Esophagus muscularis mucosa (tissue), 4 donors: ENCODE measurements at regions of chr5 and their contacts with region 1.

Region 1: DNA sequence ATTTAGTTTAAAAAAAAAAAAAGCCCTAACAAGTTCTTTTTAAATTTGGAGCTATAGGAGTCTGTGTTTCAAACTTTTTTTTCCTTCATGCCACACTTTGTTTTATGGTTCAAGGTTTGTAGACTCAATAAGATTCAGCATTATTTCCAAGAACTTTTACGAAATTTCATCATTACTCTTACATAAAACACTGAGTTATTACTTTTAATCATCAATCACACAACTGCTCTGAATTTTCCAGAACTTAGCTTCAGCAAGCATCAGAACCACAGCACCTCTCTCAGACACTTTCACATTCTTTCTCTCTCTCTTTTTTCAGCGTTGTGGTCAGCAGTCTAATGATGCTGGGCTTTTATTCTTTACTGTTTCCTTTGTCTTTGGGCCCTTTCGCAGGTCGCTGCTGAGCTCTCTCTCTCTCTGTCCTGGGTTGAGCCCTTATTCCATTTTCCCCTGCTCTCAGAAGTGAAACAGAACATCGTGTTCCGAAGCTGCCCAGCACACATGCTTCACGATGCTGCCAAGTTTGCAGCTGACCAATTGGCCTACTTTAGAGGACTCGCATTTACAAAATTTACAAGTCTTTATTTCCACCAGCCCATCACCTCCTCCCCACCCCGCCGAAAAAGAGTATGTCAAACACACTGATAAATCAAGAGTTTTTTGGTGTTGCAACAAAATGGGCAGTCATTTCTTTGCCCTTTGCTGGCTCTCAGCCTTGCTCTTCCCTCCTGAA is 44.6 kb upstream of the PIK3R1 start:
- DNase-seq: peak; percentile 96
- H3K4me3 ChIP-seq: peak overlapping the region; percentile 6 to 32 (median 13)
- H3K27ac ChIP-seq: peak overlapping the region; percentile 82 to 89 (median 87)
- H3K4me1 ChIP-seq: peaks cover 26 to 43% (median 38%) of the 10 kb centered on the region in 4 donors
- H3K27me3 ChIP-seq: no peaks in the 10 kb centered on the region
- CTCF ChIP-seq: no peak
- EP300 ChIP-seq: peak; percentile 96
- POLR2A ChIP-seq: peak; percentile 12

Region 2: GRCh38 chr5:68033961-68034571 is 136.9 kb before region 1 on chr5:
- intact Hi-C with region 1: loop called (anchors 10 kb)
- DNase-seq: no peak
- H3K4me3 ChIP-seq: no peak overlapping the region
- H3K27ac ChIP-seq: peak overlapping the region in 1 of 4 donors; percentile 29
- H3K4me1 ChIP-seq: peaks cover 8 to 34% (median 27%) of the 10 kb centered on the region in 4 donors
- H3K27me3 ChIP-seq: no peaks in the 10 kb centered on the region
- CTCF ChIP-seq: no peak
- EP300 ChIP-seq: no peak
- POLR2A ChIP-seq: no peak

Region 3: DNA sequence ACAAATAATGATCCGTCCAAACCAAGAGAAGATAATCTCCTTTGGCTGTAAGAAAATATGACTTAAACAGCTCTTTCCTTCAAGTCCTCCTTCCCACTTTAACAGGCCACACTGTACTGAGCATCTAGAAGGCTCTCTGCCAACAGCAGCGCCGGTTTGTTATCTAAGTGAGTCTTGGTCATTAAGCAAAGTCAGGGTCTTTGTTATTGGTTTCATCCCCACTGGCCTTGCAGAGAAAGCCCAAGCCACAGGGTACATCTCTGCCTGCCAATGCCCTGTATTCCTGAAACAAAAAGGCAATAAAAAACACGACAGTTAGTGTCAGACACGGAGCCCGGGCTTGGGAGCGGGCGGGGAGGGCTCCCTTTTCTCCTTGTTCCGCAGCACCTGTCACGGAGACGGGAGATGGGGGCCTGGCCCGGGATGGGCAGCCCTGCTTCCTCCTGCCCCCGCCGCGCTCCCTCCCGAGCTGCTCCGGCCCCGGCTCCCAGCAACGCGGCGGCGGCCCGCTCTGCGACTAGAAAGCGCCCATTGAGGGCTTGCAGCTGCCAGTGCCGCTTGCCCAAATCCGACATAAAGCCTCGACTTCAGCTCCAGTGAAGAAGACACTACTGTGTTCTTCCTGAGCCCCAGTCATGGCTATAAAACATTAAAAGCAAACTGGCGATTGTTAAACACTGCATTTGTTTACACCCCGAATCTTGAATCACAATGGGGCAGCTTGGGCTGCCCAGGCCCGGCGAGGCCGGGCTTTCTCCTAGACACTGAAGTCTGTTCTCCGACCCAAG is 16.5 kb after region 1 on chr5:
- intact Hi-C with region 1: no loop called
- DNase-seq: peak; percentile 91
- H3K4me3 ChIP-seq: peak overlapping the region; percentile 39 to 51 (median 47)
- H3K27ac ChIP-seq: peak overlapping the region; percentile 78 to 83 (median 80)
- H3K4me1 ChIP-seq: peaks cover 0 to 23% (median 17%) of the 10 kb centered on the region in 4 donors
- H3K27me3 ChIP-seq: no peaks in the 10 kb centered on the region
- CTCF ChIP-seq: no peak
- EP300 ChIP-seq: no peak
- POLR2A ChIP-seq: no peak

Region 4: GRCh38 chr5:68252673-68253623 is 82.0 kb after region 1 on chr5:
- intact Hi-C with region 1: loop called (anchors 10 kb)
- DNase-seq: no peak
- H3K4me3 ChIP-seq: peak overlapping the region; percentile 33 to 45 (median 42)
- H3K27ac ChIP-seq: peak overlapping the region; percentile 74 to 82 (median 78)
- H3K4me1 ChIP-seq: peaks cover 87 to 100% (median 100%) of the 10 kb centered on the region in 4 donors
- H3K27me3 ChIP-seq: no peaks in the 10 kb centered on the region
- CTCF ChIP-seq: peak; percentile 68 to 77 (median 74)
- EP300 ChIP-seq: no peak
- POLR2A ChIP-seq: no peak

Region 5: GRCh38 chr5:68343421-68343826 is 172.4 kb after region 1 on chr5:
- intact Hi-C with region 1: no loop called
- DNase-seq: no peak
- H3K4me3 ChIP-seq: no peak overlapping the region
- H3K27ac ChIP-seq: peak overlapping the region; percentile 38 to 65 (median 62)
- H3K4me1 ChIP-seq: peaks cover 9 to 24% (median 20%) of the 10 kb centered on the region in 4 donors
- H3K27me3 ChIP-seq: no peaks in the 10 kb centered on the region
- CTCF ChIP-seq: no peak
- EP300 ChIP-seq: no peak
- POLR2A ChIP-seq: no peak